Calu3 (cell line): ENCODE measurements at regions of chr10 and their contacts with region 1.

Region 1: DNA sequence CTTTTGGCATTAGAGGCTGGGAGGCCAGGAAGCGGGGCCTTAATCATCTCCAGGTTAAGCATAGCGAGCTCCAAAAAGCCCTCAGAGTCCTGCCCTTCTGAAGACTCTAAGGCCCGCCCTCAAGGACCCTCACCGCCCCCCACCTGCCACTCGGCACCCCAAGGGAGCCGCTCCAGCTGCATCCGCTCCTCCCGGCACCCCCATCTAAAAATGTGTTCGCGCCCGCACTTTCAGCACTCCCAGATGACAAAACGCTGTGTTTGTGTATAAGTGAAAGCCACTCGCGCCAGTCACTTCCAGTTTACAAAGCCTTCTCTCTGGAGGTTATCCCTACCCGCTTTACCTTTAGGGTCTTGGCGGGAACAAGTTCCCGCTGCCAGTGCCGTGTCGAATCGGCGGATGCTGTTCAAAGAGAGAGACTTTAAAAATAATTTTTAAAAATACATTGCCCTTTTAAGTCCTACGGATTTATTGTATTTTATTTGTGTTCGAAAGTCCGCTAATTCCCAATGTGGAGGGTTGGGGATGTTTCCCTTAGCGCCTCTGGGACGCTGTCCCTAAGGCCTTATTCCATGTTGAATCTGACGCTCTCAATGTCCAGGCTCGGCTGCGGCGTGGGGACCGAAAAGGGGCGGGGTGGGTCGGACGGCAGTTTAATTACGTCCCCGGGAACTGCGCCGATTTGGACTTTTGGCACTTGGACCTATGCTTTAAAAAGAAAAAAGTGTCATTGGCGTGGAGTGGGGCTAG is at the starts of genes DCLRE1A and NHLRC2:
- DNase-seq: peak; percentile 61
- H3K4me3 Mint-ChIP-seq: peak within 1 kb of the TSS; percentile 90
- H3K27ac Mint-ChIP-seq: peak within 1 kb of the TSS; percentile 87
- H3K4me1 Mint-ChIP-seq: peaks cover 2% of the 10 kb centered on the region
- H3K27me3 Mint-ChIP-seq: no peaks in the 10 kb centered on the region
- CTCF ChIP-seq: no peak
- total RNA-seq, gene DCLRE1A: 7.4 and 7.9 TPM in 2 replicates
- total RNA-seq, gene NHLRC2: 18.7 and 20.2 TPM in 2 replicates

Region 2: GRCh38 chr10:112271982-112272381 is 1582.2 kb before region 1 on chr10:
- CTCF ChIA-PET with region 1: no interaction called
- intact Hi-C with region 1: no loop called
- DNase-seq: no peak
- H3K4me3 Mint-ChIP-seq: no peak overlapping the region
- H3K27ac Mint-ChIP-seq: no peak overlapping the region
- H3K4me1 Mint-ChIP-seq: no peaks in the 10 kb centered on the region
- H3K27me3 Mint-ChIP-seq: no peaks in the 10 kb centered on the region
- CTCF ChIP-seq: no peak

Region 3: GRCh38 chr10:113704637-113705343 is 149.4 kb before region 1 on chr10:
- CTCF ChIA-PET with region 1: no interaction called
- intact Hi-C with region 1: loop called (anchors 10 kb)
- DNase-seq: peak; percentile 32
- H3K4me3 Mint-ChIP-seq: no peak overlapping the region
- H3K27ac Mint-ChIP-seq: no peak overlapping the region
- H3K4me1 Mint-ChIP-seq: no peaks in the 10 kb centered on the region
- H3K27me3 Mint-ChIP-seq: no peaks in the 10 kb centered on the region
- CTCF ChIP-seq: peak; percentile 24

Region 4: DNA sequence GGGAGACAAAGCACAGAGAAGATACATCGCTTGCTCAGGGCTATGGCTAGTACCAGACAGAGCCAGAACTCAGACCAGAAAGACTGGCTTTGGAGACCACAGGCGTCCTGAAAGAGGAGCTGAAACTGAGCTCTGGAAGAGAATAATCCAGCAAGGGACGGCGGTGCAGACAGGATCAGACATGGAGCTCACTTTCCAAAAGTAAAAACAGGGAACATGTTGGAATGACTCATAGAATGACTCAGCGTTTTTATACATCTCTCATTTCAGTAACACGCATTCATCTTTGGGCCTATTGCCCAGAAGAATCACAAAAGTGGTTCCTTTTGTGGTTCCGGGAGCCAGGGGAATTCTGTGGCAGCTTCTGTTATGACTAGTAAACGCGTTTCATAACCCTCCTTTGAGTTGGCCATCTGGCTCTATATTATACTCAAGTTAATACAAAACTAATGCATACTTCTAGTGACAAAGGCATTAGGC is 65.5 kb before region 1 on chr10:
- CTCF ChIA-PET with region 1: no interaction called
- intact Hi-C with region 1: no loop called
- DNase-seq: no peak
- H3K4me3 Mint-ChIP-seq: no peak overlapping the region
- H3K27ac Mint-ChIP-seq: no peak overlapping the region
- H3K4me1 Mint-ChIP-seq: peaks cover 10% of the 10 kb centered on the region
- H3K27me3 Mint-ChIP-seq: no peaks in the 10 kb centered on the region
- CTCF ChIP-seq: no peak

Region 5: GRCh38 chr10:113897693-113898618 is 43.8 kb after region 1 on chr10:
- CTCF ChIA-PET with region 1: no interaction called
- intact Hi-C with region 1: no loop called
- DNase-seq: no peak
- H3K4me3 Mint-ChIP-seq: no peak overlapping the region
- H3K27ac Mint-ChIP-seq: no peak overlapping the region
- H3K4me1 Mint-ChIP-seq: no peaks in the 10 kb centered on the region
- H3K27me3 Mint-ChIP-seq: no peaks in the 10 kb centered on the region
- CTCF ChIP-seq: no peak

Region 6: GRCh38 chr10:114245121-114245791 is 391.1 kb after region 1 on chr10:
- CTCF ChIA-PET with region 1: no interaction called
- intact Hi-C with region 1: no loop called
- DNase-seq: peak; percentile 18
- H3K4me3 Mint-ChIP-seq: peak overlapping the region; percentile 39
- H3K27ac Mint-ChIP-seq: peak overlapping the region; percentile 40
- H3K4me1 Mint-ChIP-seq: peaks cover 31% of the 10 kb centered on the region
- H3K27me3 Mint-ChIP-seq: peaks cover 18% of the 10 kb centered on the region
- CTCF ChIP-seq: no peak